PC-9 (cell line): ENCODE measurements at regions of chr22 and their contacts with region 1.

Region 1: GRCh38 chr22:27194106-27194748 is 536.8 kb downstream of the MIAT start:
- DNase-seq: peak; percentile 24 to 81
- H3K4me3 ChIP-seq: no peak overlapping the region
- H3K27ac ChIP-seq: peak overlapping the region; percentile 66
- H3K4me1 ChIP-seq: peaks cover 27% of the 10 kb centered on the region
- H3K27me3 ChIP-seq: no peaks in the 10 kb centered on the region
- CTCF ChIP-seq: no peak

Region 2: DNA sequence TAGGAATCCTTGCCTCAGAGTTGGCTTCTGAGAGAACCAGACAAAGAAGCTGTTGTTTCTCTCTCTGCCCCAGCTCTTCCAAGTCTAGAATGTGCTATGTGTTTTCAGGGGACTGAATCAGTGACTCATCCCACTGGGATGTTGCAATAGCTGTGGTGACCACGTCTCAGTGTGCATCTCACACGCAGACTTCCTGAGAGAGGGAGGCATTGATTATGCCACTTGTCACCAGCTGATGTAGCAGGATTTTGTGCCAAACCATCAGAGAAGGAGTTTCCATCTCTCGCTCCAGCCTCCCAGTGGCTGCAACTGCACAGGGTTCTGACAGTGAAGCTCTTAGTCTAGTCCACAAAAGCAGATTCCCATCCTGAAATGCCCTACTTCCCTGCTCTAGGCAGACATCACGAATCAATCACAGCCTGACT is 81.0 kb before region 1 on chr22:
- CTCF ChIA-PET with region 1: no interaction called
- POLR2A ChIA-PET with region 1: no interaction called
- intact Hi-C with region 1: loop called (anchors 1 kb)
- DNase-seq: peak; percentile 57 to 95
- H3K4me3 ChIP-seq: no peak overlapping the region
- H3K27ac ChIP-seq: peak overlapping the region; percentile 77
- H3K4me1 ChIP-seq: peaks cover 74% of the 10 kb centered on the region
- H3K27me3 ChIP-seq: no peaks in the 10 kb centered on the region
- CTCF ChIP-seq: no peak

Region 3: DNA sequence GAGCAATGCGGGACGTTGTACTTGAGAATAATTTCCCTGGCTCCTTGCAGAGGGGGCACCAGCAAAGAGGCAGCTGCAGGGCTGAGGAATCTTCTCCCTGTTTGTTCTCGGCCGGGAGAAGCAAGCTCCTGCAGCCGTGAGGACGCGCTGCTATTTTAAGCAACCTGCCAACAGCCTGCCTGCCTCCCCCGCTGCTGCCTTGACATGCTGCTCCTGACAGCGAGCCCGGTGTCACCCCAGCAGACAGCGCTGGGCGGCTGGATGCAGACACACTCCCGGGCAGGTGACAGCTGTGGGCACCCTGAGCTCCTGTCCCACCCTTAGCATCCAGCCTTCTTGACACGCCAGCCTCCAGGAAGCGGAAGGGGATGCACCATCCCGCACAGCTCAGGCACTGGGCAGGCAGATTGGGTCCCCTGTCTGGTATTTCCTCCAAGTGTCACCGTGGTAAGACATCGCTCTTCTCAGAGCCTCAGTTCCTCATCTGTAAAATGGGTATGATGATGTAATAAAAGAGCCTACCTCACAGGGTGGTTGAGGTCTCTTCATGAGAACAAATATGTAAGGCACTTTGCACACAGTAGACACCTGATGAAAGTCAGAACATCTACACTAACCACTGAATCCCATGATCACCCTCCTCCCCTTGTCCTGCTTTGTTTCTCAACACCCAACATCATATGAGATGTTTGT is 76.7 kb after region 1 on chr22:
- CTCF ChIA-PET with region 1: no interaction called
- POLR2A ChIA-PET with region 1: no interaction called
- intact Hi-C with region 1: no loop called
- DNase-seq: no peak
- H3K4me3 ChIP-seq: no peak overlapping the region
- H3K27ac ChIP-seq: no peak overlapping the region
- H3K4me1 ChIP-seq: no peaks in the 10 kb centered on the region; the same call in 1 of the 2 replicates
- H3K27me3 ChIP-seq: no peaks in the 10 kb centered on the region
- CTCF ChIP-seq: no peak

Region 4: DNA sequence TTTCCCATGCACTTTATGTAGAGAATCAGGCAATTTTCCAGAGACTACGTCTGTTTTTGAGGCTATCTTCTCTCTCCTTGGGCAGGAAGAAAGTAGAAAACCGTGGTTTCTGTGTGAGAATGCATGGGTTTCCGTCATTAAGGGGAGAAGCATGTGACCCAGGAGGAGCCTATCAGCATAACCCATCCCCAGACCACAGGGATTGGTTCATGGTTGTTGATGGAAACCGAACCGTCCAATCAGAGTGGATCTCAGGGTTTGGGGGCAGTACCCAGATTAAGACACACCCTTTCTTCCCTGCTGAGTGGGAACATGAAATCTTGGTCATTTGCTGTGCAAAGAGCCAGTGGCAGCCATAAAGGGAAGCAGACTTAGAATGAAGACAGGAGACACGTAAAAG is 89.5 kb after region 1 on chr22:
- CTCF ChIA-PET with region 1: no interaction called
- POLR2A ChIA-PET with region 1: no interaction called
- intact Hi-C with region 1: no loop called
- DNase-seq: no peak
- H3K4me3 ChIP-seq: no peak overlapping the region
- H3K27ac ChIP-seq: no peak overlapping the region
- H3K4me1 ChIP-seq: peaks cover 8% of the 10 kb centered on the region
- H3K27me3 ChIP-seq: no peaks in the 10 kb centered on the region
- CTCF ChIP-seq: no peak

Region 5: DNA sequence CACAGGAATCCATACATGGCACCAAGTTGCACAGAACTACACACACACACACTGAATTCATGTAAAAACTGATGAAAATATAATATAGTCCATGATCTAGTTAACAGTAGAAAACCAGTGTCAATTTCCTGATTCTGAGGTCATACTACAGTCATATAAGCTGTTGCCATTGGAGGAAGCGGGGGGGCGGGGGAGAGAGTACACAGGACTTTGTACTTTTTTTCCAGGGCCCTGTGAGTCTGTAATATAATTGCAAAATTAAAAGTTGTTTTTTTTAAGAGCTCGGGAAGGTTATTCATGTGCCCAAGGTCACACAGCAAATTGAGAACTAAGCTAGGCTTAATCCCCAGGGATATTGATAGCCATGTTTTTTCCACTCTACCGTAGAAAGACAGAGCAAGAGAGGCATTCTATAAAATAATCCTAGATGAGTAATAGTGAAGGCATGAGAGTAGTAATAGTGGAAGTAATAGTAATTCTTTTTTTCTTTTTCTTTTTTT is 295.0 kb after region 1 on chr22:
- CTCF ChIA-PET with region 1: no interaction called
- POLR2A ChIA-PET with region 1: no interaction called
- intact Hi-C with region 1: no loop called
- DNase-seq: no peak
- H3K4me3 ChIP-seq: no peak overlapping the region
- H3K27ac ChIP-seq: no peak overlapping the region
- H3K4me1 ChIP-seq: peaks cover 27% of the 10 kb centered on the region
- H3K27me3 ChIP-seq: no peaks in the 10 kb centered on the region
- CTCF ChIP-seq: no peak